IMR-90 (cell line): ENCODE measurements at regions of chr12 and their contacts with region 1.

Region 1: DNA sequence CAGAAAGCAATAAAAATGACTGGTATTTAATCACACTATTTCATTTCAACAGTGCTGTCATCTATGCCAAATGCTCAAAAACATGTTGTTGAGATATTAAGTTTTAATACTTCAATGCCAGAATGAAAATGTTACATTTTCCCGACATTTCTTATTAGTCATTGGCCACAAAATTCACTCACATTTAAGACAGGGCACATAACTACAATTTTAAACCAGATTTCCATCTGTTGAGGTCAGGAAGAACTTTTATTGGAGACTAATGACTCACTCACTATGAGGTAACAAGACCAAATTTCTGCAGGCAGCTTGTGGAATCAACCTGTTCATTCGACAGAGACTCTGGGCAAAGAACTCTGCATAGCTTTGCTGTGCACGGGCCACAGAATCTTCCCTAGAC is 36.8 kb downstream of the PPTC7 start:
- DNase-seq: peak; percentile 94
- ATAC-seq: peak; percentile 56
- H3K4me3 ChIP-seq: no peak overlapping the region
- H3K27ac ChIP-seq: no peak overlapping the region
- H3K4me1 ChIP-seq: peaks cover 20% of the 10 kb centered on the region
- H3K27me3 ChIP-seq: no peaks in the 10 kb centered on the region
- CTCF ChIP-seq: no peak
- POLR2A ChIP-seq: no peak
- RAD21 ChIP-seq: no peak

Region 2: DNA sequence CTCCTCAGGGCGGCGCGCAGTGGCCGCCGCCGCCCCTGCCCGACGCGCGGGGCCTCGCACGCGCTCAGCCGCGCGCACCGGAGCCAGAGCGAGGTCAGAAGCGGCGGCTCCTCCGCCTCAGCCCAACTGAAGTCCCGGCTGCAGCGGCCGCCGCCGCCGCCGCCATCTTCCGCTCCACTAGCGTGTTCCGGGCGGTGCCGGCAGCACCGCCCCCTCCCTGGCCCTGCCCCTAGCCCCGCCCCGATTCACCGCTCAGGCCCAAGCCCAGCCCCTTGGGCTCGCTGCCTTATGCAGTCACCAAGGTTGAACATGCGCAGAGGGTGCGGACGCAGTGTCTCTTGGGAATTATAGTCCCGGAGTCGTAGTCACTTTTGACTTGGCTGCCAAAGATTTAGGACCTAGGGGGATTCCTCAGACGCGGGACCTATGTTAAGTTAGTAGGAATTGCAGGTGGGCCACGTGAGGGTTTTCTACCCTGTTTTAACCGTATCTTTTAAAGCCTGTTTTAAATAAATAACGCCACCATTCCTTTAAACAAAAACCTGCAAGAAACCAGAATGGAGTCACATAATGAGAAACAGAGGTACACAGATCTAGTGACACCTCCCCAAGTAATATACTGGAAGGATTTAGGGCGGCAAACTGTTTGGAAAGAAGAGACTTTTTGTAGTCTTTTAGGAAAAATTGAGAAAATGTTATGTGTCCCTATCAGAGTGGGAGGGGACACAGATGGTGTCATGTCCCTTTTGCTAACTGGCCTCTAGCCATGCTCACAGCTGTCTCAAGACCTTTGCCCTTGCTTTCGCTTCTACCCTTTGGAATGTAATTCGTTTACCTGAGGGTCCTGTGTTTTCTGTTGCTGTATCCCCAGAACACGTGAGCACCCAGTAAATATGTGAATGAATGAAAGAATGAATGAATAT is 37.1 kb after region 1 on chr12 and contains the start of gene PPTC7:
- CTCF ChIA-PET with region 1: interaction called, 5 read pairs
- POLR2A ChIA-PET with region 1: no interaction called
- dilution Hi-C with region 1: no loop called
- in situ Hi-C with region 1: no loop called
- intact Hi-C with region 1: loop called (anchors 5 kb)
- DNase-seq: peak; percentile 94
- ATAC-seq: peak; percentile 99
- H3K4me3 ChIP-seq: peak within 1 kb of the TSS; percentile 85
- H3K27ac ChIP-seq: peak within 1 kb of the TSS; percentile 36
- H3K4me1 ChIP-seq: peaks cover 13% of the 10 kb centered on the region
- H3K27me3 ChIP-seq: no peaks in the 10 kb centered on the region
- CTCF ChIP-seq: no peak
- POLR2A ChIP-seq: peak; percentile 70
- RAD21 ChIP-seq: 0 out of 2 replicates have a peak, but pooled peaks have one; percentile 1
- total RNA-seq, gene PPTC7: 4.1 and 4.7 TPM in 2 replicates